ENCODE measurements at regions of chr1 and their contacts with region 1.

Region 1: GRCh38 chr1:163361123-163361934 is 39.6 kb downstream of the NUF2 start:
- DNase-seq: no peak
- H3K4me3 ChIP-seq: no peak overlapping the region
- H3K27ac ChIP-seq: no peak overlapping the region
- H3K27me3 ChIP-seq: peaks cover 2% of the 10 kb centered on the region
- CTCF ChIP-seq: peak; percentile 51

Region 2: GRCh38 chr1:163337631-163338030 is 23.7 kb before region 1 on chr1:
- CTCF ChIA-PET with region 1: interaction called, 10 read pairs
- POLR2A ChIA-PET with region 1: no interaction called
- DNase-seq: peak; percentile 30
- H3K4me3 ChIP-seq: no peak overlapping the region
- H3K27ac ChIP-seq: no peak overlapping the region
- H3K27me3 ChIP-seq: no peaks in the 10 kb centered on the region
- CTCF ChIP-seq: no peak

Region 3: DNA sequence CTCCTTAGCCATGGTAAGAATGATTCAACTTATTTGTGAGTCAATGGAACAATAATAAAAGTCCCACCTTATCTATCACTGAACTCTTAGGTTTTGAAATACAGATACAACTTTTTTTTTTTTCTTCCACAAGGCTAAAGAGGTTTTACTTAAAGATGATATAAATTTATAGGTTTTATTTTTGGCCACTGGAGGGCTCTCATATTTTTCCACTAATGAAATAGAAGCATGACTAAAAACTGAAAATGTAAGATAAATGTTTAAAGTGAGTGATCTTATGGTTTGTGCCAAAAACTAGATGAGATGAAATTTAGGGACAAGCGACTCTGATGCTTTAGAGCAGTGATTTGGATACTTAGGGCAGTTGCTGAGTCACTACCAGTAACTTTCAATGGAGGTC is 459.4 kb after region 1 on chr1:
- CTCF ChIA-PET with region 1: no interaction called
- POLR2A ChIA-PET with region 1: no interaction called
- DNase-seq: no peak
- H3K4me3 ChIP-seq: no peak overlapping the region
- H3K27ac ChIP-seq: no peak overlapping the region
- H3K27me3 ChIP-seq: no peaks in the 10 kb centered on the region
- CTCF ChIP-seq: peak; percentile 19; the same call in 1 of the 2 replicates